A549 (cell line): ENCODE measurements at regions of chr13 and their contacts with region 1.

Region 1: GRCh38 chr13:112545856-112546255 is 42.1 kb downstream of the TUBGCP3 start:
- DNase-seq: peak in 1 of 2 experiments; percentile 6
- ATAC-seq: no peak
- H3K4me3 ChIP-seq: no peak overlapping the region
- H3K27ac ChIP-seq: no peak overlapping the region
- H3K4me1 ChIP-seq: no peaks in the 10 kb centered on the region
- CTCF ChIP-seq: no peak
- EP300 ChIP-seq: no peak
- POLR2A ChIP-seq: no peak
- RAD21 ChIP-seq: no peak

Region 2: GRCh38 chr13:112532837-112533745 is 12.8 kb before region 1 on chr13:
- CTCF ChIA-PET with region 1: no interaction called
- POLR2A ChIA-PET with region 1: no interaction called
- DNase-seq: no peak
- ATAC-seq: no peak
- H3K4me3 ChIP-seq: no peak overlapping the region
- H3K27ac ChIP-seq: no peak overlapping the region
- H3K4me1 ChIP-seq: no peaks in the 10 kb centered on the region
- CTCF ChIP-seq: no peak
- EP300 ChIP-seq: no peak
- POLR2A ChIP-seq: no peak
- RAD21 ChIP-seq: no peak

Region 3: DNA sequence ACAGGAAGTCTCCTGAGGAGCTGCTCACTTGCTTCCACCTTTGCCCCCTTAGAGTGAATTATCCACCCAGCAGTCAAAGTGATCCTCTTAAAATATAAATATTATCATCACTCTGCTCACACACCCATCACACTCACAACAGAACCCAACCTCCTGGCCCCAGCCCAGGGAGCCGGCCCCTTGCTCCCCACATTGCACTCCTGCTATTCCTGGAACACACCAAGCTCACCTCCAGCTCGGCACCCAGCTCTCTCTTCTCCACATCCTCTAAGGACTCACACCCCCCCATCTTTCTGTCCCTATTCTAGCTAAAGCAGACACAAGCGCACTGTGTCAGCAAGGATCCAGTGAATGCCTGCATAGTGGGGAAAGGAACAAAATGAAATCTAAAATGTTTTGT is 35.1 kb after region 1 on chr13:
- CTCF ChIA-PET with region 1: no interaction called
- POLR2A ChIA-PET with region 1: interaction called, 10 read pairs
- DNase-seq: no peak
- ATAC-seq: no peak
- H3K4me3 ChIP-seq: no peak overlapping the region
- H3K27ac ChIP-seq: no peak overlapping the region
- H3K4me1 ChIP-seq: no peaks in the 10 kb centered on the region
- CTCF ChIP-seq: no peak
- EP300 ChIP-seq: no peak
- POLR2A ChIP-seq: no peak
- RAD21 ChIP-seq: no peak